Naive thymus-derived CD4-positive, alpha-beta T cell (primary cell): ENCODE measurements at regions of chr6 and their contacts with region 1.

Region 1: DNA sequence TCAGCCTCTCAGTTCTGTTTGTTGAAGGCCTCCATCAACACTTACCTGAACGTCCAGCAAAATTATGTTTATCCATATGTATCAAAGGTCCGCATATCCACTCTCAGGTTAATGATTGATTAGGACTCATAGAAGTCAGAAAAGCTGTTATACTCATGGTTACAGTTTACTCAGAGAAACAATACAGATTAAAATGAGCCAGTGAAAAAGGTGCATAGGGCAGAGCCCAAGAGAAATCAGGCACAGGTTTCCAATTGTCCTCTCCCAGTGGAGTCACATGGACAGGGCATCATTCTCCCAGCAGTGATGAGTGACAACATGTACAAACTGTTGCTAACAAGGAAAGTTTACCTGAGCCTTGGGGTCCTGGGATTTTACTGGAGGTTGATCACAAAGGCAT is 36.2 kb downstream of the THEMIS start:
- DNase-seq: no peak
- ATAC-seq: no peak
- H3K4me3 ChIP-seq: no peak overlapping the region
- H3K4me3 Mint-ChIP-seq: peak overlapping the region in 4 of 10 donors; percentile 31 to 54 (median 44)
- H3K27ac ChIP-seq: no peak overlapping the region
- H3K27ac Mint-ChIP-seq: peak overlapping the region in 8 of 9 donors; percentile 45 to 91 (median 78)
- H3K4me1 ChIP-seq: peaks cover 12 to 13% of the 10 kb centered on the region in 2 donors
- H3K4me1 Mint-ChIP-seq: peaks cover 32 to 82% (median 72%) of the 10 kb centered on the region in 7 donors
- H3K27me3 ChIP-seq: no peaks in the 10 kb centered on the region
- H3K27me3 Mint-ChIP-seq: no peaks in the 10 kb centered on the region

Region 2: GRCh38 chr6:127684501-127684900 is 180.2 kb before region 1 on chr6:
- CTCF ChIA-PET with region 1: no interaction called
- POLR2A ChIA-PET with region 1: no interaction called
- intact Hi-C with region 1: no loop called
- DNase-seq: no peak
- ATAC-seq: no peak
- H3K4me3 ChIP-seq: no peak overlapping the region
- H3K4me3 Mint-ChIP-seq: no peak overlapping the region
- H3K27ac ChIP-seq: no peak overlapping the region
- H3K27ac Mint-ChIP-seq: no peak overlapping the region
- H3K4me1 ChIP-seq: no peaks in the 10 kb centered on the region
- H3K4me1 Mint-ChIP-seq: no peaks in the 10 kb centered on the region
- H3K27me3 ChIP-seq: no peaks in the 10 kb centered on the region
- H3K27me3 Mint-ChIP-seq: no peaks in the 10 kb centered on the region

Region 3: GRCh38 chr6:127824061-127824460 is 40.6 kb before region 1 on chr6:
- CTCF ChIA-PET with region 1: no interaction called
- POLR2A ChIA-PET with region 1: no interaction called
- intact Hi-C with region 1: no loop called
- DNase-seq: no peak
- ATAC-seq: no peak
- H3K4me3 ChIP-seq: no peak overlapping the region
- H3K4me3 Mint-ChIP-seq: peak overlapping the region in 8 of 10 donors; percentile 23 to 66 (median 42)
- H3K27ac ChIP-seq: no peak overlapping the region
- H3K27ac Mint-ChIP-seq: peak overlapping the region in 6 of 9 donors; percentile 23 to 83 (median 62)
- H3K4me1 ChIP-seq: peaks cover 24% of the 10 kb centered on the region in 2 donors
- H3K4me1 Mint-ChIP-seq: peaks cover 23 to 96% (median 88%) of the 10 kb centered on the region in 7 donors
- H3K27me3 ChIP-seq: no peaks in the 10 kb centered on the region
- H3K27me3 Mint-ChIP-seq: no peaks in the 10 kb centered on the region

Region 4: GRCh38 chr6:127879685-127880084 is 15.0 kb after region 1 on chr6:
- CTCF ChIA-PET with region 1: interaction called, 3 read pairs
- POLR2A ChIA-PET with region 1: interaction called, 5 read pairs
- intact Hi-C with region 1: loop called (anchors 1 to 2 kb)
- DNase-seq: no peak
- ATAC-seq: no peak
- H3K4me3 ChIP-seq: no peak overlapping the region
- H3K4me3 Mint-ChIP-seq: peak overlapping the region; percentile 43 to 85 (median 73)
- H3K27ac ChIP-seq: no peak overlapping the region
- H3K27ac Mint-ChIP-seq: peak overlapping the region; percentile 6 to 90 (median 74)
- H3K4me1 ChIP-seq: peaks cover 54 to 58% of the 10 kb centered on the region in 2 donors
- H3K4me1 Mint-ChIP-seq: peaks cover 28 to 89% (median 75%) of the 10 kb centered on the region in 7 donors
- H3K27me3 ChIP-seq: no peaks in the 10 kb centered on the region
- H3K27me3 Mint-ChIP-seq: no peaks in the 10 kb centered on the region

Region 5: DNA sequence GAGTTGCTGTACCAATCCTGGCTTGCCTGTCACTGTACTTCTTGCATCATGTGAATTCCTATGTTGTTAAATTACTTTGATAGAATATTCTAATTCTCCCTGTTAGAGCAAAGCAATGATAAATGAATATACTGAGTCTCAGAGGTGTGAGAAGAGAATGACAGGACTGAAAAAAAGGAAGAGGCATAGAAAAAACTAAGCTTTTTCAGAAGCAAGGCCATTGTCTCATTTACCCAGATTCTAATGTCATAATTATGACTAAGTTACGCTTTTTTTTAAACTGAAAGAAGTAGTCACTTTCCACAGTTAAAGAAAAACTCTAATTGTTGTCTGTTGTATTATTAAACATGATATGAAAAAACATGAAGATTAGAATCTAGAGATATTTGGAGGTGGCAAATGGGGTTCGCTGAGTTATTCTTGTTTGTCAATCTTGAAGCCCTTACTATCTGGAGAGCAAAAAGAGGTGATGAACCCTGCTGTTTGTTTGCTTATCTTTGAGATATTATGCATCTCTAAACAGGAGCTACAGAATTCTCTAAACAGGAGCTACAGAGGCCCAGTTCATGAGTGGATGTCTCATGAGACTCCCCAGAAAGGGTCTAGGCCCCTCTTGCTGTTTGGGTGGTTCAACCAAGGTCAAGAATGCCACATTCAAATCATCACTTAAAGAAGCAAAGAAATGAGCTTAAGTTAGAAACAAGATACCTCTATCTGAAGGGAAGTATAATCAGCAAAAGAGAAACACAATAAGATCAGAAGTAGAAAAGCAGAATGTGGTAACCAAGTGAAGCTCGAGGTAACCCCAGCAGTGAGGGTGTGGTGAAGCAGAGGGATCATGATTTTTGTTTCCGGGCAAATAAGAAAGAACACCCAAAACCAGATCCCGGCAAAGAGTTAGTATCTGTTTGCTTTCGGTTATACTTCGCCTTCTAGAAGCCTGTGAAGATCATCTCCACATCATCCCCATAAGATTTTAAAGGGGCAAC is 69.4 kb after region 1 on chr6:
- CTCF ChIA-PET with region 1: no interaction called
- POLR2A ChIA-PET with region 1: no interaction called
- intact Hi-C with region 1: no loop called
- DNase-seq: peak in 8 of 9 donors; percentile 31 to 84 (median 76)
- ATAC-seq: peak; percentile 93
- H3K4me3 ChIP-seq: peak overlapping the region; percentile 31
- H3K4me3 Mint-ChIP-seq: peak overlapping the region; percentile 49 to 83 (median 70)
- H3K27ac ChIP-seq: peak overlapping the region; percentile 66
- H3K27ac Mint-ChIP-seq: peak overlapping the region; percentile 82 to 97 (median 91)
- H3K4me1 ChIP-seq: peaks cover 35 to 41% of the 10 kb centered on the region in 2 donors
- H3K4me1 Mint-ChIP-seq: peaks cover 18 to 63% (median 55%) of the 10 kb centered on the region in 7 donors
- H3K27me3 ChIP-seq: no peaks in the 10 kb centered on the region
- H3K27me3 Mint-ChIP-seq: no peaks in the 10 kb centered on the region